A673 (cell line): ENCODE measurements at regions of chr11 and their contacts with region 1.

Region 1: GRCh38 chr11:24386546-24387397 is 110.1 kb upstream of the LUZP2 start:
- DNase-seq: peak; percentile 53
- H3K4me3 ChIP-seq: no peak overlapping the region
- H3K27ac ChIP-seq: no peak overlapping the region
- H3K4me1 ChIP-seq: no peaks in the 10 kb centered on the region
- H3K27me3 ChIP-seq: no peaks in the 10 kb centered on the region
- CTCF ChIP-seq: peak; percentile 60

Region 2: DNA sequence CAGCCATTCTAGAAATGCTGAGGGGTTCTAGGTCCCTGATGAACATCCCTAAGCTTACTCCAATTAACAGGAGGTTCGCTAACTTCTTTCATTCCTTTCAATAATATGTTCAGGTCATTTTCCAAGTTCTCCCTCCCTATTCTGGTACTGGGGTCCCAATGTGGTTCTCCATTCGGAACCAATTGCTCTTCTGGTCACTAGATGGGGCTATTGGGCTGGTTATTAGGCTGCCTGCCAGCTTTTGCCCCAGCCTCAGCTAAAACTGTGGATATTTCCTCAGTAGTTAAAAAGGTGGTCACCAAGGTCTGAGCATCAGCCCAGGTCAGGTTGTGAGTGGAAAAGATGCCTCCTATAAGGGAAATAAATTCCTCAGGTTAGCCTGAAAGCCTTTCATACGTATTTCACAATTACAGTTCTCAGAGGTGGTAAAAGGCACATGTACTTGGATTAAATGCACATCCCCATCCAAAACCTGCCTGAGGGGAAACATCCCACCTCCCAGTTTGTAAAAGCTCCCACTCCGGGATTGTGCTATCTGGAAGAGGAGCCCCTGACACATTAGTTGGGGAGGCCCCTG is 1365.4 kb before region 1 on chr11:
- CTCF ChIA-PET with region 1: no interaction called
- POLR2A ChIA-PET with region 1: no interaction called
- intact Hi-C with region 1: loop called (anchors 10 kb)
- DNase-seq: peak; percentile 16
- H3K4me3 ChIP-seq: no peak overlapping the region
- H3K27ac ChIP-seq: no peak overlapping the region
- H3K4me1 ChIP-seq: no peaks in the 10 kb centered on the region
- H3K27me3 ChIP-seq: no peaks in the 10 kb centered on the region
- CTCF ChIP-seq: peak; percentile 62

Region 3: DNA sequence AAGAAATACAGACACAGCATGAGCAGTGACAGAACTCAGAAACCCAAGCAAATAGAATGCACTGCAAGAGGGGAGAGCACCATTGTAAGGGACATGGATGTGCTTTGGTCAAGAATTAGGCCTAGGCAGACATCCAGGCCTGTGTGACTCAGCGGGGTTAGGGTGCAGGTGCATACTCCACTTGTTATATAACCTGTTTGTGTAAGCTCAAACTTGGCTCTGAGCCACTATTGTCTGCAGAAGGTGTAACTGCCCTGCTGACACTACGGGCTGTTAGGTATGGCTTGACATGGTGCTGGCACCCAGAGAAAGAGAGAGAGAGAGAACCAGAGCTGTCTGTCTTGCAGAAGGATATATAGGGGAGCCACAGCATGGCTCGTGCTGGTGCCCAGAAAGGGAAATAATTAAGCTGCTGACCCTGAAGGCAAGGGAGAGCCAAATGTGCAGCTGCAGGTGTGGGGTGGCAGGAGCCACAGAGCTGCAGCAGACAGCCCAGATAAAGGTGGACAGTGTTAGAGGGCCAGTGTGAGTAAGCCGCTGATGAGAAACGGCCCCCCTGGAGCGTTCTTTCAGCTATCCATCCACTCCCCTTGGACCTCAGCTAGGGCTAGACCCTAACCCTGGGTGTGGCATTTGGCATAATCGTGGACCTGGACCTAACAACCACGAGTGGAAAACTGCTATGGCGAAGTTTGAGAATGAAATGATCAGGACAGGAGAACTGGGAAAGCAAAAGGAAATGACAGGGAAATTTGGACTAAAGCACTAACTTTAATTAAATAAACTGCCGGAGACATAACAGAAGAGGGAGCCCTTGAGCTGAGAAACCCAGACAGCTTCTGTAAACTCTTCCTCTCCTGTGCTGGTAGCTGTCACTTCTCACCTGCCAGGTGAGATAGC is 1273.5 kb before region 1 on chr11:
- CTCF ChIA-PET with region 1: no interaction called
- POLR2A ChIA-PET with region 1: no interaction called
- intact Hi-C with region 1: loop called (anchors 5 kb)
- DNase-seq: peak; percentile 28
- H3K4me3 ChIP-seq: no peak overlapping the region
- H3K27ac ChIP-seq: no peak overlapping the region
- H3K4me1 ChIP-seq: no peaks in the 10 kb centered on the region
- H3K27me3 ChIP-seq: no peaks in the 10 kb centered on the region
- CTCF ChIP-seq: peak; percentile 58

Region 4: GRCh38 chr11:23540101-23540561 is 846.6 kb before region 1 on chr11:
- CTCF ChIA-PET with region 1: no interaction called
- POLR2A ChIA-PET with region 1: no interaction called
- intact Hi-C with region 1: loop called (anchors 5 kb)
- DNase-seq: peak; percentile 55
- H3K4me3 ChIP-seq: no peak overlapping the region
- H3K27ac ChIP-seq: no peak overlapping the region
- H3K4me1 ChIP-seq: no peaks in the 10 kb centered on the region
- H3K27me3 ChIP-seq: no peaks in the 10 kb centered on the region
- CTCF ChIP-seq: peak; percentile 58

Region 5: GRCh38 chr11:24216488-24216887 is 170.3 kb before region 1 on chr11:
- CTCF ChIA-PET with region 1: no interaction called
- POLR2A ChIA-PET with region 1: no interaction called
- intact Hi-C with region 1: no loop called
- DNase-seq: no peak
- H3K4me3 ChIP-seq: no peak overlapping the region
- H3K27ac ChIP-seq: no peak overlapping the region
- H3K4me1 ChIP-seq: no peaks in the 10 kb centered on the region
- H3K27me3 ChIP-seq: no peaks in the 10 kb centered on the region
- CTCF ChIP-seq: no peak

Region 6: DNA sequence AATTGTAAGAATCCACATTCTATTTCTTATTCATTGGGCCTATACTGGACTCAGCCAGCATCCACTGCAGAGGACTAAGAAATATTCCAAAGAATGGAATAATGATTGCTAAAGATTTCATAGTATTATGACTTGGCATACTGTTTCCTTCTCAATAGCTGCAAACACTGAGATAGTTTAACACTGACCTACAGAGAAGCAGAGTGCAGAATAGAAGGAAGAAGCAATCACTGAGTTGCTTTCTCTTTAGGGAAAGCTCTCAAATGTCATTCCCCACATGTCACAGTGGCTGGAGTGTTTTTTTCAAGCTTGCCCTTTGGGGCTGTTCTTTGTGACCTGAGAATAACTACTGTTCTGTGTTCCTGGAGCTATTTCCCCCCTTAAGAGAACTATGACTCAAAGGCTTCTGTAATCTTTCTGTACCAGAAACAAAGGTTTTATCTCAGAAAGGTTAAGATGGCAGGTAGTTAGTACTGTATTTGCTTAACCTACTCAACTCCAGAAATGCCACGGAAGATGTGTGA is 133.5 kb before region 1 on chr11:
- CTCF ChIA-PET with region 1: no interaction called
- POLR2A ChIA-PET with region 1: no interaction called
- intact Hi-C with region 1: no loop called
- DNase-seq: no peak
- H3K4me3 ChIP-seq: no peak overlapping the region
- H3K27ac ChIP-seq: no peak overlapping the region
- H3K4me1 ChIP-seq: no peaks in the 10 kb centered on the region
- H3K27me3 ChIP-seq: no peaks in the 10 kb centered on the region
- CTCF ChIP-seq: no peak

Region 7: DNA sequence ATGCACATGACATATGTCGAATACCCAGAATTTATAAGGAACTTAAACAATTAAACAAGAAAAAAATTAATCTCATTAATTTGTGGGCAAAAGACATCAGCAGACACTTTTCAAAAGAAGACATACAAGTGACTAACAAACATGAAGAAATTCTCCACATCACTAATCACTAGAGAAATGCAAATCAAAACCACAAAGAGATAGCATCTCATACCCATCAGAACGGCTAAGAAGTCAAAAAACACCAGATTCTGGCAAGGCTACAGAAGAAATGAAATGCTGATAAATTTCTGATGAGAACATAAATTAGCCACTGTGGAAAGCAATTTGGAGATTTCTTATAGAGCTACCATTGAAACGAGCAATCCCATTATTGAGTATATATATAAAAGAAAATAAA is 100.5 kb before region 1 on chr11:
- CTCF ChIA-PET with region 1: no interaction called
- POLR2A ChIA-PET with region 1: no interaction called
- intact Hi-C with region 1: no loop called
- DNase-seq: no peak
- H3K4me3 ChIP-seq: no peak overlapping the region
- H3K27ac ChIP-seq: no peak overlapping the region
- H3K4me1 ChIP-seq: no peaks in the 10 kb centered on the region
- H3K27me3 ChIP-seq: no peaks in the 10 kb centered on the region
- CTCF ChIP-seq: no peak

Region 8: GRCh38 chr11:24356501-24356900 is 30.3 kb before region 1 on chr11:
- CTCF ChIA-PET with region 1: no interaction called
- POLR2A ChIA-PET with region 1: no interaction called
- intact Hi-C with region 1: no loop called
- DNase-seq: no peak
- H3K4me3 ChIP-seq: no peak overlapping the region
- H3K27ac ChIP-seq: no peak overlapping the region
- H3K4me1 ChIP-seq: no peaks in the 10 kb centered on the region
- H3K27me3 ChIP-seq: no peaks in the 10 kb centered on the region
- CTCF ChIP-seq: no peak